BJ (cell line): ENCODE measurements at regions of chr1 and their contacts with region 1.

Region 1: GRCh38 chr1:8015036-8015808 is 10.9 kb downstream of the ERRFI1 start:
- DNase-seq: peak; percentile 59
- H3K4me3 ChIP-seq: no peak overlapping the region
- H3K27me3 ChIP-seq: no peaks in the 10 kb centered on the region
- CTCF ChIP-seq: peak; percentile 66

Region 2: DNA sequence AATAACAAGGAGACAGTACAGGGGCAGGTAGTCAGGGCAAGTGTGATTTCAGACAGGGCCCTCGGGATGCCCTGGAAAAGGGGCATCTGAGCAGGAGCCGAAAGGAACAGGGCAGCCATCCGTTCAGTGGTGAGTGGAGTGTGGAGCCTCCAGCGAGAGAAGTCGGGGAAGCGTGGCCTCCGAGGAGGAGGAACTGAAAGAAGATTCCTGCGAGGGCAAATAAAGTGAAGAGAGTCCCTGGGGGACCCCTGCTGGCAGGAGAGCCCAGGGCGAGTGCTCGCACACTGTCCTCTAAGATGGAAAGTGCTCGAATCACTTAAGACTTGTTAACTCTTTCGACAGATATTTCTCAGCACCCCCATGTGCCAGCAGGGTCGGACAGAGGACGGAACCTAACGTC is 158.9 kb before region 1 on chr1:
- CTCF ChIA-PET with region 1: no interaction called
- POLR2A ChIA-PET with region 1: no interaction called
- DNase-seq: no peak
- H3K4me3 ChIP-seq: no peak overlapping the region
- H3K27me3 ChIP-seq: no peaks in the 10 kb centered on the region
- CTCF ChIP-seq: no peak

Region 3: GRCh38 chr1:7983086-7983778 is 32.0 kb before region 1 on chr1:
- CTCF ChIA-PET with region 1: interaction called, 29 read pairs
- POLR2A ChIA-PET with region 1: no interaction called
- DNase-seq: no peak
- H3K4me3 ChIP-seq: no peak overlapping the region
- H3K27me3 ChIP-seq: no peaks in the 10 kb centered on the region
- CTCF ChIP-seq: no peak

Region 4: GRCh38 chr1:8026153-8026975 is 11.1 kb after region 1 on chr1 and contains the start of gene ERRFI1:
- CTCF ChIA-PET with region 1: interaction called, 28 read pairs
- POLR2A ChIA-PET with region 1: no interaction called
- DNase-seq: no peak
- H3K4me3 ChIP-seq: peak within 1 kb of the TSS; percentile 68
- H3K27me3 ChIP-seq: no peaks in the 10 kb centered on the region
- CTCF ChIP-seq: no peak
- polyA plus RNA-seq, gene ERRFI1: 20.5 and 30.3 TPM in 2 replicates

Region 5: GRCh38 chr1:8040586-8040985 is 25.4 kb after region 1 on chr1:
- CTCF ChIA-PET with region 1: no interaction called
- POLR2A ChIA-PET with region 1: no interaction called
- DNase-seq: peak; percentile 73
- H3K4me3 ChIP-seq: no peak overlapping the region
- H3K27me3 ChIP-seq: no peaks in the 10 kb centered on the region
- CTCF ChIP-seq: no peak

Region 6: DNA sequence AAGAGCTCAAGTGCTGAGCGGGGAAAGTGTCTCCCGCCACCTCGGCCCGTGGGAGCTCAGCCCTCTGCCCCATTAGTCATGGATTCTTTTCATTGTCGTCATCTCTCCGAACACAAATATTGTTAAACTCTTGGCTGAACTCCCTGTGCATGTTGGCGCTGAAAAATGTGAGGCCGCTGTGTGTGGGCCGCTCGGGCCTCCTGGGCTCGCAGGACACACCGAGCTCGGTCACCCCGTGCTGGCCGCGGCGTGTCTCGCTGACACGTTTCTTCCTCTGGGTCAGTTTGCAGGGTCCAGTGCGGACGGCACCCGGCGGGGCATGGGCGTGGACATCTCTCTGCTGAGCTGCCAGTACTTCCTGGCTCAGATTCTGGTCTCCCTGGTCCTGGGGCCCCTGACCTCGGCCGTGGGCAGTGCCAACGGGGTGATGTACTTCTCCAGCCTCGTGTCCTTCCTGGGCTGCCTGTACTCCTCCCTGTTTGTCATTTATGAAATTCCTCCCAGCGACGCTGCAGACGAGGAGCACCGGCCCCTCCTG is 328.3 kb after region 1 on chr1:
- CTCF ChIA-PET with region 1: interaction called, 78 read pairs
- POLR2A ChIA-PET with region 1: no interaction called
- DNase-seq: peak; percentile 89
- H3K4me3 ChIP-seq: peak overlapping the region; percentile 6; the same call in 1 of the 2 replicates
- H3K27me3 ChIP-seq: no peaks in the 10 kb centered on the region; the same call in 1 of the 2 replicates
- CTCF ChIP-seq: no peak